MCF 10A (cell line): ENCODE measurements at regions of chr16 and their contacts with region 1.

Region 1: DNA sequence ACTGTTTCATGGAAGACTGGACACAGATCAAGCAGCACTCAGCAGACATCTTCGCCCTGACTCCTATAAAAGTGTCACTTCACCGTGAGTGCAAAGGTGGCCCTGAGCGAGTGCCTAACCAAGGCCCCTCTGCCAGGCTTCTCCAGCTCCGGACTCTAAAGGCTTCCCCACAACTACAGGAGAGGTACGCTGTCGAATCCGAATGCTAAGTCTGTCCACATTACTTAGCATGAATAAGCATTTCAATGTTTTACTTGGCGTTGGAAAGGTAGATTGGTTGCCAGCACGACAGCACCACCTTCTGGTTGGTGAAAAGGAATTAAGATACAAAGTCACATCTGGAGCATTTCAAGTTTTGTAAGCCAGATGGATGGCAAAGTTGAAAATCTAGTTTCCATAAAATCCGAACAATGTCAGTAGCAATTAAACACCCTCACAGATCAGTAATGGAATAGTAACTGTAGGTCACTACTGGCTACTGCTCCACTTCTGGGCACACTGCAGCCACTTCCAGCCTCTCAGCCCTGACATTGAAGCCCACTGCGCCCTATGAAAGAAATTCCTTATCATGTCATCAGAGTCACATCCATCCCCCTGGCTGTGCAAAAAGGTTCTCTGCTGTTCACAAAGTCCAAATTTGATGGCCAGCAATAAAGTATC is 100.9 kb downstream of the PARN start:
- DNase-seq: peak; percentile 93
- H3K4me3 Mint-ChIP-seq: peak overlapping the region; percentile 33
- H3K27ac Mint-ChIP-seq: no peak overlapping the region
- H3K4me1 Mint-ChIP-seq: peaks cover 25% of the 10 kb centered on the region
- H3K27me3 Mint-ChIP-seq: no peaks in the 10 kb centered on the region
- CTCF ChIP-seq: peak; percentile 80

Region 2: GRCh38 chr16:13919683-13920509 is 609.2 kb before region 1 on chr16 and contains the start of gene ERCC4:
- CTCF ChIA-PET with region 1: interaction called, 3 read pairs
- POLR2A ChIA-PET with region 1: no interaction called
- intact Hi-C with region 1: loop called (anchors 5 kb)
- DNase-seq: peak; percentile 99
- H3K4me3 Mint-ChIP-seq: peak within 1 kb of the TSS; percentile 91
- H3K27ac Mint-ChIP-seq: peak within 1 kb of the TSS; percentile 95
- H3K4me1 Mint-ChIP-seq: peaks cover 11% of the 10 kb centered on the region
- H3K27me3 Mint-ChIP-seq: peaks cover 10% of the 10 kb centered on the region
- CTCF ChIP-seq: peak; percentile 72
- total RNA-seq, gene ERCC4: 10.3 and 15.9 TPM in 2 replicates

Region 3: DNA sequence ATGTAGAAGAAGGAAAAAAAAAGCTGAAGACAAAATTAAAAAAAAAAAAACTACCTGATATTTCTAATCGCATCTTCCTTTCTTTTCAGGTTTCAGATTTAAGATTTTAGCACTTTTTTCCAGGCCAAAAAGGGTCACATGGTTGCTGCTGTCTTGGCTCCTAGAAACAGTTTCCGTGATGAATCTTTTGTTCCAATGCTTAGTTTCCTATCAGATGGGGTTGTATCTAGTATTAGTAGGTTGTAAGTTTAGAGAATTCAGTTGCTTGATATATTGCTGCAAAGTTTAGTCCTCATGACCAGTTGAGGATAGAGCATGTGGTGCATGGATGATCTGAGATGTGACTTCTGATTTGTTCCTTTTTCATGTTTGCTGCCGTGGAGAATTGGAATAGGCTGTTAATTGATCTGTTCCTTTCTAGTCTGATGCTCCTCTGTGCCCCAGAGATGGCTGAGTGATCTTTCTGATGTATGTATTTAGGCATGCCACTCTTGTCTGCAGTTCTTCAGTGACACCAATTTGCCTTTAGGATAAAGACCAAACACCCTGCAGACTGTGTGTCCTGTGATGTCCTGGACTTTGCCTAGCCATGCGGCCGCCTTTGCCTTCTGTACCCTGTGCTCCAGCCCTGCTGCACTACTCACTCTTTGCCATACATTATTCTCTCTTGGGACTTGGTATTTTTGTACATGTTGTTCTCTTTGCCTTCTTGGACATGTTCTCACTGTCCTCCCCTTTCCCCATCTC is 364.1 kb before region 1 on chr16:
- CTCF ChIA-PET with region 1: no interaction called
- POLR2A ChIA-PET with region 1: no interaction called
- intact Hi-C with region 1: no loop called
- DNase-seq: no peak
- H3K4me3 Mint-ChIP-seq: no peak overlapping the region
- H3K27ac Mint-ChIP-seq: no peak overlapping the region
- H3K4me1 Mint-ChIP-seq: peaks cover 6% of the 10 kb centered on the region
- H3K27me3 Mint-ChIP-seq: no peaks in the 10 kb centered on the region
- CTCF ChIP-seq: no peak

Region 4: DNA sequence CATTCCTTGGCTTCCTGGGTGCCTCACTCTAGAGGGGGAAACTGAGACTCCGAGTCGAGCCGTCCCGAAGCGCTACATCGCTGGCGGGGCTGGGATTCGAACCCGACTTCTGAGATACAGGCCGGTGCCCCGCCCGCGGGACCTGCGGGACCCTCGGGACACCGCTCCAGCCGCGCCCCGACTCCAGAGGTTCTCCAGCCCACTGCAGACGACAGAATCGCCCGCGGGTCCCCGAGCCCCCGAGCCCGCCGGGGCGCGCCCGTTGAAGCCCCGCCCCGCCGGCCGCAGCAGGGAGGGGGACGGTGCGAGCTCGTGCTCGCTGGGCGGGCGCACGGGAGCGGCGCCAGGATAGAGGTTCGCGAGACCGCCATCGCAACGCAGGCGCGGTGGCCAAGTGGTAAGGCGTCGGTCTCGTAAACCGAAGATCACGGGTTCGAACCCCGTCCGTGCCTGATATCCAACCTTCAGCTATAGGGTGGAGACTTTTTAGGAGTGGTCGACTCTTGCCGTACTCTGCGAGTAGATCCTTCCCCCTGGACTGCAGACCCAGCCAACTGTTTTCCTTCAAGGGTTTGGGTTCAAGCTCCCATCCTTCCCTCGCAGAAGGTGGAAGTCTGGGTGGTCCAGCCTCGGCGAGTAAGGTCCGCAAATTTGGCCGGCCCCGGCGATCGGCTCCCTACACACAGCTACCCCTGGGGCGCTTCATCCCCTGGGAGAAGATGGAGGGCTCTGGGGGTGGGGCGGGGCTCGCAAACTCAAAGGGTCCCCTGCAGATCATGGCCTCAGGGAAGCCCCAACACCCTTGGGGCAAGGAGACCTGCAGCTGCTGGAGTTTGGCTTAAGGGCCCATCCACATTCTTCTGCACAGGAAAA is 243.4 kb before region 1 on chr16:
- CTCF ChIA-PET with region 1: interaction called, 12 read pairs
- POLR2A ChIA-PET with region 1: interaction called, 6 read pairs
- intact Hi-C with region 1: loop called (anchors 5 kb)
- DNase-seq: peak; percentile 92
- H3K4me3 Mint-ChIP-seq: peak overlapping the region; percentile 82
- H3K27ac Mint-ChIP-seq: peak overlapping the region; percentile 23
- H3K4me1 Mint-ChIP-seq: peaks cover 5% of the 10 kb centered on the region
- H3K27me3 Mint-ChIP-seq: no peaks in the 10 kb centered on the region
- CTCF ChIP-seq: no peak

Region 5: DNA sequence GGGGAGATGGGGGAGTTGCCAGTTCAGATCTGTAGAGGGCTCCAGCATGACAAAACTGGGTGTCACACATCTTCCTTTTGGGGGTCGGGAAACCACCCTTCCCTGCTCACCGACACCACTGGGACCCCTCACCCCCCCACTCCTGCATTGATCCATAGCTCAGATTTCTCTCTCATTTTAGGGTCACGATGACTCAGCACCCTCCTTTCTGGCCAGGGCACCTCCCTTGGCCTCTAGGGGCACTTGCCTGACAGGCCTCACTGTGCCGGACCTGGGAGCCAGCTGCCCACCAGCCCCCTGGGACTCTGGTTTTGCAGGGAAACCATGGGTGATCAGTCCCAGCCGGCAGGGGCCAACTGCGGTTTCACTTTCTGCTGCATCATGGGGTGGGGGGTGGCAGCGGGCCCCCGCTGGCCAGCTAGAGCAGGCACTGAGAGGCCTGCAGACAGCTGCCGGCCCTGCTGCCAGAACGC is 218.6 kb before region 1 on chr16:
- CTCF ChIA-PET with region 1: interaction called, 10 read pairs
- POLR2A ChIA-PET with region 1: interaction called, 19 read pairs
- intact Hi-C with region 1: no loop called
- DNase-seq: no peak
- H3K4me3 Mint-ChIP-seq: peak overlapping the region; percentile 58
- H3K27ac Mint-ChIP-seq: peak overlapping the region; percentile 94
- H3K4me1 Mint-ChIP-seq: peaks cover 53% of the 10 kb centered on the region
- H3K27me3 Mint-ChIP-seq: no peaks in the 10 kb centered on the region
- CTCF ChIP-seq: no peak

Region 6: DNA sequence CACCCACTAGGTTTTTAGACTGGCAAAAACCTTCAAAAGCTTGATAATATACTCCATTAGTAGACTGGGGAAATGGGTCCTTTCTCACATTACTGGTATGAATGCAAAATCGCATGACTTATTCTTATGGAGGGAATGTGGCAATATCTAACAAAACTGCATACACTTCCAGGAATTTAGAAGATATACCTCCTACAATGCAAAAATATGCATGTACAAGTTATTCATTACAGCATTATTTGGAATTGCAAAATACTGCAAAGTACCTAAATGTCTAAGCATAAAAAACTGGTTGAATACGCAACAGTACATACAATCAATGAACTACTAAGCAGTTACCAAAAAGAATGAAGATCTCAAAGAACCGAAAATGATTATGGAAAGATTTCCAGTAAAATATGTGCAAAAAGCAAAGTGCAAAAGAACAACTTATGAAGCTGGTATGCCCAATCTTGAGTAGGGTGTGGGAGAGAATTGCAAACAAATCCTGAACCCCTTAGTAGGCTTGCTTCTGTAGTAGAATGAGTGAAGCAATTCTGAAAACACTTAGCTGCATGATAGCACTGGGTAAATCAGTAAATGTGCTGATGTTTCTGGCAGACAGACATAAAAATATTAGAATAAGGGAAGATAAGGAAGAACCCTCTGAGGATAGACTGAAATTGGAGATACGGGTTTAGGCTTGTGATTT is 79.2 kb before region 1 on chr16:
- CTCF ChIA-PET with region 1: interaction called, 4 read pairs
- POLR2A ChIA-PET with region 1: interaction called, 4 read pairs
- intact Hi-C with region 1: loop called (anchors 10 kb)
- DNase-seq: peak; percentile 57
- H3K4me3 Mint-ChIP-seq: no peak overlapping the region
- H3K27ac Mint-ChIP-seq: peak overlapping the region; percentile 56
- H3K4me1 Mint-ChIP-seq: peaks cover 23% of the 10 kb centered on the region
- H3K27me3 Mint-ChIP-seq: no peaks in the 10 kb centered on the region
- CTCF ChIP-seq: no peak

Region 7: GRCh38 chr16:14501331-14502255 is 27.5 kb before region 1 on chr16:
- CTCF ChIA-PET with region 1: interaction called, 30 read pairs
- POLR2A ChIA-PET with region 1: interaction called, 52 read pairs
- intact Hi-C with region 1: loop called (anchors 2 kb)
- DNase-seq: peak; percentile 96
- H3K4me3 Mint-ChIP-seq: peak overlapping the region; percentile 57
- H3K27ac Mint-ChIP-seq: peak overlapping the region; percentile 78
- H3K4me1 Mint-ChIP-seq: peaks cover 56% of the 10 kb centered on the region
- H3K27me3 Mint-ChIP-seq: no peaks in the 10 kb centered on the region
- CTCF ChIP-seq: no peak

Region 8: GRCh38 chr16:14545346-14545884 is 16.3 kb after region 1 on chr16:
- CTCF ChIA-PET with region 1: interaction called, 19 read pairs
- POLR2A ChIA-PET with region 1: no interaction called
- intact Hi-C with region 1: no loop called
- DNase-seq: no peak
- H3K4me3 Mint-ChIP-seq: no peak overlapping the region
- H3K27ac Mint-ChIP-seq: peak overlapping the region; percentile 46
- H3K4me1 Mint-ChIP-seq: peaks cover 5% of the 10 kb centered on the region
- H3K27me3 Mint-ChIP-seq: no peaks in the 10 kb centered on the region
- CTCF ChIP-seq: no peak

Region 9: GRCh38 chr16:14579266-14579665 is 50.1 kb after region 1 on chr16:
- CTCF ChIA-PET with region 1: no interaction called
- POLR2A ChIA-PET with region 1: no interaction called
- intact Hi-C with region 1: no loop called
- DNase-seq: no peak
- H3K4me3 Mint-ChIP-seq: no peak overlapping the region
- H3K27ac Mint-ChIP-seq: no peak overlapping the region
- H3K4me1 Mint-ChIP-seq: no peaks in the 10 kb centered on the region
- H3K27me3 Mint-ChIP-seq: no peaks in the 10 kb centered on the region
- CTCF ChIP-seq: no peak

Region 10: DNA sequence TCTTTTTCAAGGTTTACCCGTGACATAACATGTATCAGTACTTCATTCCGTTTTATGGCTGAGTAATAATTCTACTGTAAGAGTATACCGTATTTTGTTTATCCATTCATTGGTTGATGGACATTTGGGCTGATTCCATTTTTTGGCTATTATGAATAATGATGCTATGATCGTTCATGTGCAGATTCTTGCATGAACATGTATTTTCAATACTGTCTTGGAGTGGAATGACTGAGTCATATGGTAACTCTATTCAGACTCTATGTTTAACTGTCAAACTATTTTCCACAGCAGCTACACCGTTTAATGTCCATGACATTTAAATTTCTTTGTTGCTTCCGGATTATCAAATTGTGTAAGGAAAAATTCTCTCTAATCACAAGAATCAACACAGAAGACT is 121.5 kb after region 1 on chr16:
- CTCF ChIA-PET with region 1: no interaction called
- POLR2A ChIA-PET with region 1: no interaction called
- intact Hi-C with region 1: no loop called
- DNase-seq: no peak
- H3K4me3 Mint-ChIP-seq: no peak overlapping the region
- H3K27ac Mint-ChIP-seq: peak overlapping the region; percentile 39
- H3K4me1 Mint-ChIP-seq: peaks cover 5% of the 10 kb centered on the region
- H3K27me3 Mint-ChIP-seq: no peaks in the 10 kb centered on the region
- CTCF ChIP-seq: no peak